Transverse colon (tissue), 4 donors: ENCODE measurements at regions of chr1 and their contacts with region 1.

Region 1: DNA sequence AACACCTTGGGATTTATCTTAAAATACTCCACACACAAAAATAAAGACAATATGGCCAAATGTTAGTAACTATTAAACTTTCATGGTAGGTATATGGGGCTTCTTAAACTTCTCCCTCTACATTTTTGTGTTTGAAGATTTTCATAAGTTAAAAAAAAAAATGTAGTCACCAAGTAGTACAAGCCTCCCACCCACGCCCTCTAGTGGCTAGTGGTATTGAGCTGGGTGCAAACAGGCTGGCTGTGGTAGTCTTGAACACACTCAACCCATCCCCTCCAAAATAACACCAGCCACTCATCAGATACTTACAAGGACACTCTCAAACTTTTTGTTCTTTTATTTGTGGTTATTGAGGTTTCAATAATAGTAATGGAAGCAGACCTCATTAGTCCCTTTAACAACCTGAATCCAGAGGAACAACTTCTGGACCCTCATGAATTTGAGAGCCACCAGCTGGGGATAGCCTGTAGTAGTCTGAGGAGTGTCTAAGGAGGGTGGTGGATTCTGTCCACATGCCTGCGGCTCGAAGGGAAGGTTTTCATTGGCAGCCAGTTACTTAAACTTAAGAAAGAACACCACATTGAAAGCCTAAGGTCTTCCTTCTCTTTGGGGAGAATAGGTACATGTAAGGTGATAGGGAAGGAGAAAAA is 15.6 kb downstream of the RD3 start:
- DNase-seq: peak; percentile 78
- H3K4me3 ChIP-seq: no peak overlapping the region
- H3K27ac ChIP-seq: no peak overlapping the region
- H3K4me1 ChIP-seq: peaks cover 0 to 10% (median 6%) of the 10 kb centered on the region in 4 donors
- H3K27me3 ChIP-seq: peaks cover 18% of the 10 kb centered on the region
- CTCF ChIP-seq: peak in 4 of 5 experiments; percentile 64 to 82 (median 80)
- EP300 ChIP-seq: no peak
- POLR2A ChIP-seq: no peak

Region 2: GRCh38 chr1:211323156-211324063 is 152.9 kb before region 1 on chr1:
- in situ Hi-C with region 1: loop called in 3 of 4 experiments (anchors 10 to 25 kb)
- intact Hi-C with region 1: no loop called
- DNase-seq: peak; percentile 68
- H3K4me3 ChIP-seq: no peak overlapping the region
- H3K27ac ChIP-seq: no peak overlapping the region
- H3K4me1 ChIP-seq: peaks cover 0 to 21% (median 18%) of the 10 kb centered on the region in 4 donors
- H3K27me3 ChIP-seq: no peaks in the 10 kb centered on the region
- CTCF ChIP-seq: peak; percentile 74 to 83 (median 81)
- EP300 ChIP-seq: no peak
- POLR2A ChIP-seq: no peak

Region 3: GRCh38 chr1:211514030-211514754 is 37.9 kb after region 1 on chr1:
- in situ Hi-C with region 1: loop called in 1 of 4 experiments (anchors 5 kb)
- intact Hi-C with region 1: no loop called
- DNase-seq: peak; percentile 89
- H3K4me3 ChIP-seq: no peak overlapping the region
- H3K27ac ChIP-seq: peak overlapping the region; percentile 83 to 88 (median 85)
- H3K4me1 ChIP-seq: peaks cover 7 to 31% (median 26%) of the 10 kb centered on the region in 4 donors
- H3K27me3 ChIP-seq: no peaks in the 10 kb centered on the region
- CTCF ChIP-seq: peak; percentile 70 to 84 (median 73)
- EP300 ChIP-seq: no peak
- POLR2A ChIP-seq: no peak